ENCODE measurements at regions of chr4 and their contacts with region 1.

Region 1: GRCh38 chr4:26860157-26860921 is at the start of gene STIM2:
- DNase-seq: peak; percentile 95 to 100 (median 98)
- ATAC-seq: peak; percentile 62
- H3K4me3 ChIP-seq: peak within 1 kb of the TSS; percentile 70 to 83
- H3K4me3 Mint-ChIP-seq: peak within 1 kb of the TSS; percentile 99
- H3K27ac ChIP-seq: peak within 1 kb of the TSS; percentile 82 to 83
- H3K27ac Mint-ChIP-seq: peak within 1 kb of the TSS; percentile 99
- H3K4me1 ChIP-seq: peaks cover 60% of the 10 kb centered on the region
- H3K4me1 Mint-ChIP-seq: peaks cover 63% of the 10 kb centered on the region
- H3K27me3 ChIP-seq: no peaks in the 10 kb centered on the region
- H3K27me3 Mint-ChIP-seq: no peaks in the 10 kb centered on the region
- CTCF ChIP-seq: no peak
- total RNA-seq, gene STIM2: 61.1 to 67.0 TPM

Region 2: GRCh38 chr4:25234390-25235370 is 1625.7 kb before region 1 on chr4:
- CTCF ChIA-PET with region 1: no interaction called
- POLR2A ChIA-PET with region 1: interaction called, 3 read pairs
- intact Hi-C with region 1: loop called (anchors 10 kb)
- DNase-seq: peak in 7 of 9 experiments; percentile 4 to 87 (median 32)
- ATAC-seq: peak; percentile 56
- H3K4me3 ChIP-seq: peak overlapping the region; percentile 77 to 81
- H3K4me3 Mint-ChIP-seq: peak overlapping the region; percentile 84
- H3K27ac ChIP-seq: peak overlapping the region; percentile 67 to 84
- H3K27ac Mint-ChIP-seq: peak overlapping the region; percentile 89
- H3K4me1 ChIP-seq: peaks cover 11% of the 10 kb centered on the region
- H3K4me1 Mint-ChIP-seq: peaks cover 35% of the 10 kb centered on the region
- H3K27me3 ChIP-seq: no peaks in the 10 kb centered on the region
- H3K27me3 Mint-ChIP-seq: no peaks in the 10 kb centered on the region
- CTCF ChIP-seq: peak; percentile 66

Region 3: GRCh38 chr4:25862411-25863346 is 997.7 kb before region 1 on chr4 and contains the start of gene SEL1L3:
- CTCF ChIA-PET with region 1: no interaction called
- POLR2A ChIA-PET with region 1: no interaction called
- intact Hi-C with region 1: loop called in 1 of 2 experiments (anchors 2 kb)
- DNase-seq: peak in 8 of 9 experiments; percentile 34 to 71 (median 51)
- ATAC-seq: peak; percentile 37
- H3K4me3 ChIP-seq: peak within 1 kb of the TSS; percentile 71 to 72
- H3K4me3 Mint-ChIP-seq: peak within 1 kb of the TSS; percentile 100
- H3K27ac ChIP-seq: peak within 1 kb of the TSS; percentile 54 to 80
- H3K27ac Mint-ChIP-seq: peak within 1 kb of the TSS; percentile 91
- H3K4me1 ChIP-seq: peaks cover 40% of the 10 kb centered on the region
- H3K4me1 Mint-ChIP-seq: peaks cover 41% of the 10 kb centered on the region
- H3K27me3 ChIP-seq: no peaks in the 10 kb centered on the region
- H3K27me3 Mint-ChIP-seq: no peaks in the 10 kb centered on the region
- CTCF ChIP-seq: no peak
- total RNA-seq, gene SEL1L3: 31.2 to 33.7 TPM

Region 4: DNA sequence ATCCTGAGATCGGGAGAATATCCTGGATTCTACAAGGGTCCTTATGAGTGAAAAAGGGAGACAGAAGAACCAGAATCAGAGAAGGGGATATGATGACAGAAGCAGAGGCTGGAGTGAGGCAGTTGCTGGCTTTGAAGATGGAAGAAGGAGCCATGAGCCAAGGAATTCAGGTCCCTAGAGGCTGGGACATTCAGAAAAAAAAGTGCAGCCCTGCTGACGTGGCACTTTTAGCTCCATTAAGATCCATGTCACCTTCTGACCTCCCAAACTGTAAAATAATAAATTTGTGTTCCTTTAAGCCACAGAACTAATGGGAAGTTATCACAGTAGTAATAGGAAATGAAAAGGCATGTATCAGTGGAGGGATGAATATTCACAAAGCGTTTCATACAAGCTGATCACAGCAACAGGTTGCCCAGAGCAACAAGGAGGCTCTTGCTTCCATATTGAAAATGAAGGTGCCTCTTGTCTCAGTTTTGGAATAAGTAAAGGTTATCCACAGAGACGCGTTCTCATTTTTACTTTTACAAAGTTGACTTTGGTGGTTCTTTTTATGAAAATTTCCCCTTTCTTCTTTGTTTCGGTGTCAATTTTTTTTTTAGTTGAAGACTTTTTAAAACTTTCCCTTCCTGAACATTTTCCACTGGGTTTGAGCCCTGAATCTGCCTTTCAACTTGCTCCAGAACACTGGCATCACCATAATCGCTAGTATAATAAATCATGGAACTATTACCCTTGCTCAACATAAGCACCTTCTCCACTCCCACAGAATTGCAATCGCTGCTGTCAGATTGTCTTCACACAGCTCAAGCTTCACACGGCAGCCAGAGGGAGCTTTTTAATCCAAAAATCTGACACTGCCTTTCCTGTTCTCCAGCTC is 667.2 kb before region 1 on chr4:
- CTCF ChIA-PET with region 1: no interaction called
- POLR2A ChIA-PET with region 1: no interaction called
- intact Hi-C with region 1: no loop called
- DNase-seq: no peak
- ATAC-seq: no peak
- H3K4me3 ChIP-seq: no peak overlapping the region
- H3K4me3 Mint-ChIP-seq: no peak overlapping the region
- H3K27ac ChIP-seq: no peak overlapping the region
- H3K27ac Mint-ChIP-seq: no peak overlapping the region
- H3K4me1 ChIP-seq: peaks cover 21% of the 10 kb centered on the region
- H3K4me1 Mint-ChIP-seq: peaks cover 29% of the 10 kb centered on the region
- H3K27me3 ChIP-seq: no peaks in the 10 kb centered on the region
- H3K27me3 Mint-ChIP-seq: no peaks in the 10 kb centered on the region
- CTCF ChIP-seq: no peak

Region 5: DNA sequence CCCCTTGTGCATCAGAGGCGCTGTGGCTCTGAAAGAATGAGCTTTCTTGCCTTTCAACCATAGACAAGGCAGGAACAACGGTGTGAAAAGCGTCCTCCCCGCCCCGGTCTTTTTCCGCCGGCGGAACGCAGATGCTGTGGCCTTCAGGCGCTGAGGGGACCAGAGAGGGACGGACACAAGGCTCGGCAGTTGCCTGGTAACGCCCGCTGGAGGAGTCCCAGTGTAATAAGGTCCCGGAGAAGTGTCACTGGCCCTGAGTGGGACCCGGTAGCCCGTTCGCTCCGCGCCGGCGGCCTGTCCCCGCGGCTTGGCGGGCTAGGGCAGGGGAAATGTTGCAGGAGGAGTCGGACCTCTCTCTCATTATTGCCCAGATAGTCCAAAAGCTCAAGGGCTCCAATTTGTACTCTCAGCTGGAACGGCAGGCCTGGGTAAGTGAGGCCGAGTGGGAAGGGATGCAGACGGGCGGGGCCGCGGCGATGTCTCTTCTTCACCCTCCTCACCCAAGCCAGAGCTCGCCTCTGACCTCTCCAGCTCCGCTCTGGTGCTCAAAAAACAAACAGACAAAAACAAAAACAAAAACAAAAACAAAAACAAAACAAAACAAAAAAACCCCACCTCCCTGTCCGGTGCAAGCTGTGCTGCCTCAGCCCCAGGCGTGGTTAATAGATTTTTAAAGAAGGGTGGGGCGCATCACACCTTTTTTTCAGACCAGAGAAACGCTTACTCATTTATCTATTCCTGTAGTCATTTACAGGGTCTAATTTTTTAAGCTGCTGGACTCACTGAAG is 276.3 kb before region 1 on chr4 and contains the start of gene TBC1D19:
- CTCF ChIA-PET with region 1: interaction called, 3 read pairs
- POLR2A ChIA-PET with region 1: interaction called, 26 read pairs
- intact Hi-C with region 1: loop called (anchors 1 to 2 kb)
- DNase-seq: peak; percentile 81 to 95 (median 86)
- ATAC-seq: peak; percentile 86
- H3K4me3 ChIP-seq: peak within 1 kb of the TSS; percentile 67 to 70
- H3K4me3 Mint-ChIP-seq: peak within 1 kb of the TSS; percentile 94
- H3K27ac ChIP-seq: peak within 1 kb of the TSS; percentile 87 to 97
- H3K27ac Mint-ChIP-seq: peak within 1 kb of the TSS; percentile 91
- H3K4me1 ChIP-seq: peaks cover 13% of the 10 kb centered on the region
- H3K4me1 Mint-ChIP-seq: peaks cover 25% of the 10 kb centered on the region
- H3K27me3 ChIP-seq: no peaks in the 10 kb centered on the region
- H3K27me3 Mint-ChIP-seq: peaks cover 1% of the 10 kb centered on the region
- CTCF ChIP-seq: no peak
- total RNA-seq, gene TBC1D19: 3.4 to 4.4 TPM

Region 6: DNA sequence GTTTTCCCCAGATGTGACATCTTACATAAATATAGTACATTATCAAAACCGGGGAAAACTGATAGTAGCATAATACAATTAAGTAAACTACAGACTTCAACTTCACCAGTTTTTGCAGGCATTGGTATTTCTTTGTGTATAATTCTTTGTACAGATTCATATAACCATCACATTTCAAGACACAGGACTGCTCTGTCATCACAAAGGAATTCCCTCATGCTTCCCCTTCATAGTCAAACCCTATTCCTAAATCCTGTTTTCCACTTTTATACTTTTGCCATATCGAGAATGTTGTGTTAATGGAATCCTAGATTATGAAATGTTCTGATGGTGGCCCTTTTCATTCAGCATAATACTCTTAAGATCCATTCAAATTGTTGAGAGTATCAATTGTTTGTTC is 36.3 kb after region 1 on chr4:
- CTCF ChIA-PET with region 1: interaction called, 3 read pairs
- POLR2A ChIA-PET with region 1: interaction called, 4 read pairs
- intact Hi-C with region 1: loop called (anchors 5 kb)
- DNase-seq: no peak
- ATAC-seq: no peak
- H3K4me3 ChIP-seq: no peak overlapping the region
- H3K4me3 Mint-ChIP-seq: no peak overlapping the region
- H3K27ac ChIP-seq: no peak overlapping the region
- H3K27ac Mint-ChIP-seq: no peak overlapping the region
- H3K4me1 ChIP-seq: peaks cover 25% of the 10 kb centered on the region
- H3K4me1 Mint-ChIP-seq: peaks cover 69% of the 10 kb centered on the region
- H3K27me3 ChIP-seq: no peaks in the 10 kb centered on the region
- H3K27me3 Mint-ChIP-seq: no peaks in the 10 kb centered on the region
- CTCF ChIP-seq: no peak

Region 7: DNA sequence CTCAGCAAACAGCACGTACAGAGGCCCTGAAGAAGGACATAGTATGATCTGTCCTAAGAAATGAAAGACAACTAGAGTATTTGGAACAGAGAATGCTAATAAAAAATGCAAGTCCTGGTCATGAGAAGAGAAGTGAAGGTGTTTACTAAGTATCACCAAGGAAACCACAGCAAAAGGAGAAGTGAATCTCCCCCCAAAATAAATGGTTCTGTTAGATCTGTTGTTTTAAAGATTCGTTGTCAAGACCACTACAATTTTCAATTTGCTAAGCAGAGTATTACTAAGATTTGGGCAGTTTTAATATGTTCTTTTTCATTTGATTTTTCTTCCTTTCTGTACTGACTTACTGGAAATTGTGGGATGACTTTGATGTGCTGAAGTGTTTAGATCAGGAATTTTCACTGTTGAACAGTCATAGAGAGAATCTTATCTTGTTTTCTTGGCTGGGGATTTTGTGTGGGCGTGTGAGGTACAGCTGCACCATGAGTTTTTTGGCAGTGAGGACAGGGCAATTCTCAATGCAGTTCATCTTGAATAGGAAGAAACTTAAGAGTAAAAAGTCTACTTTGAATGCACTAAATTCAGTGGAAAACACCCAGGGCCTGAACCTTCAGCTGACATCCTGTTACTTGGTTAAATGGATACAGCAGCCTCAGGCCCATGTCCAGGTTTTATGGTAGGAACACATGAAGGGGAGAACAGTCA is 132.5 kb after region 1 on chr4:
- CTCF ChIA-PET with region 1: interaction called, 3 read pairs
- POLR2A ChIA-PET with region 1: interaction called, 7 read pairs
- intact Hi-C with region 1: loop called (anchors 2 to 5 kb)
- DNase-seq: peak in 1 of 9 experiments; percentile 42
- ATAC-seq: peak; percentile 42
- H3K4me3 ChIP-seq: no peak overlapping the region
- H3K4me3 Mint-ChIP-seq: no peak overlapping the region
- H3K27ac ChIP-seq: peak overlapping the region in 1 of 2 experiments; percentile 13
- H3K27ac Mint-ChIP-seq: no peak overlapping the region
- H3K4me1 ChIP-seq: peaks cover 43% of the 10 kb centered on the region
- H3K4me1 Mint-ChIP-seq: peaks cover 26% of the 10 kb centered on the region
- H3K27me3 ChIP-seq: no peaks in the 10 kb centered on the region
- H3K27me3 Mint-ChIP-seq: no peaks in the 10 kb centered on the region
- CTCF ChIP-seq: no peak

Region 8: DNA sequence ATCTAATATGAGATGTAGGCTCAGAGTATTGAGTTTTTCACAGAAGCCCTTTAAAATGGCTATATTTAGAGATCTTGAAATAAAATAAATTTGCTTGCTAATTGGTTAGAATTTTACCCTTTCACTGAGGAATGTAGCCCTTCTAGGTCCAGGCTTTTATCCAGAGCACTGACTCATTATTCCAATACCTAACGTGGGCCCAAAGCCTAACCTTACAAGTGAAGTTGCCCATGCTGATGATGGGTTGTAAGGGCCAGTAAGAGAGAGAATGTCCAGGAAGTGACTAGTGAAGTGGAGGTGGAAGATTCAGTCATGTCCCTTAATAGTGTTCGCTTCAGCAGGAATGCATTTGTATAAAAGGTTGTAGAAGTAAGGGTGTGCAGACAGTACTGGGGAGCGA is 156.2 kb after region 1 on chr4:
- CTCF ChIA-PET with region 1: no interaction called
- POLR2A ChIA-PET with region 1: no interaction called
- intact Hi-C with region 1: no loop called
- DNase-seq: no peak
- ATAC-seq: no peak
- H3K4me3 ChIP-seq: no peak overlapping the region
- H3K4me3 Mint-ChIP-seq: no peak overlapping the region
- H3K27ac ChIP-seq: no peak overlapping the region
- H3K27ac Mint-ChIP-seq: peak overlapping the region; percentile 16
- H3K4me1 ChIP-seq: no peaks in the 10 kb centered on the region
- H3K4me1 Mint-ChIP-seq: peaks cover 21% of the 10 kb centered on the region
- H3K27me3 ChIP-seq: no peaks in the 10 kb centered on the region
- H3K27me3 Mint-ChIP-seq: no peaks in the 10 kb centered on the region
- CTCF ChIP-seq: no peak